AG04450 (cell line): ENCODE measurements at regions of chr5 and their contacts with region 1.

Region 1: DNA sequence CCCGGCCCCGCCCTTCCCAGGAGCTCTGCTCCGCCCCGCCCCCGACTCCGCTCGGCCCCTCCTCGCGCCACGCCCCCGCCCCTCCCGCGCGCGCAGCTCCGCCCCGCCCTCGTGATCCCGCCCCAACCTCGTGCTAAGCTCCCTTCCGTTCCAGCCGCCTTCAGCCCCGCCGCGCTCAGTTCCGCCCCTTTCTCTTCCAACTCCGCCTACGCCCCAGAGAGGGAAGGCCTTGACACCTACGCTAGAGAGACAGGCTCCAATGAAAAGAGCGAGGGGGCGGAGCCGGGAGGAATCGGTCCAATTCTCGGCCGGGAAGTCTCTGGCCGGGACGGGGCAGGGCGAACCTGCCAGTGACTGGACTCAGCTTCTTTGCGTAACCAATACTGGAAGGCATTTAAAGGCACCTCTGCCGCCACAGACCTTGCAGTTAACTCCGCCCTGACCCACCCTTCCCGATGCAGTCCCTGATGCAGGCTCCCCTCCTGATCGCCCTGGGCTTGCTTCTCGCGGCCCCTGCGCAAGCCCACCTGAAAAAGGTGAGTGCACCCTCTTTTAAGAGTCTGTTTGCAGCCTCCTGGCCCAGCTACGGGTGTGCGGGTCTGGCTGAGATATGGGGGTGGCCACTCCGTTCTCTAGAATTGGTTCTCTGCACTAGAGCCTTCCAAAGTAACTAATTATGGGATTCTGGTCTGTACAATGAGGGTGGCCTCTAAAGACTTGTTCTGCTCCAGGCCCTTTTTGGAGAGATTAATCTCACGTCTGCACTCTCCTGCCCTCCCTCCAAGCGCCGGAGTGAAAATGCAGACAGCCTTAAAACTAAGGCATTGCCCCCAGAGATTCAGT is at the start of gene GM2A:
- DNase-seq: peak; percentile 97
- H3K4me3 ChIP-seq: peak within 1 kb of the TSS; percentile 90
- H3K27ac ChIP-seq: no peak within 1 kb of the TSS
- H3K27me3 ChIP-seq: peaks cover under 1% of the 10 kb centered on the region
- CTCF ChIP-seq: no peak
- polyA plus RNA-seq, gene GM2A: 18.4 and 20.9 TPM in 2 replicates

Region 2: GRCh38 chr5:151239237-151239861 is 13.6 kb before region 1 on chr5:
- CTCF ChIA-PET with region 1: interaction called, 21 read pairs
- POLR2A ChIA-PET with region 1: interaction called, 6 read pairs
- DNase-seq: no peak
- H3K4me3 ChIP-seq: no peak overlapping the region
- H3K27ac ChIP-seq: no peak overlapping the region
- H3K27me3 ChIP-seq: peaks cover 17% of the 10 kb centered on the region
- CTCF ChIP-seq: peak; percentile 77

Region 3: GRCh38 chr5:151345808-151346478 is 93.0 kb after region 1 on chr5:
- CTCF ChIA-PET with region 1: no interaction called
- POLR2A ChIA-PET with region 1: no interaction called
- DNase-seq: no peak
- H3K4me3 ChIP-seq: no peak overlapping the region
- H3K27ac ChIP-seq: no peak overlapping the region
- H3K27me3 ChIP-seq: peaks cover 13% of the 10 kb centered on the region
- CTCF ChIP-seq: no peak